AG04449 (cell line): ENCODE measurements at regions of chr3 and their contacts with region 1.

Region 1: DNA sequence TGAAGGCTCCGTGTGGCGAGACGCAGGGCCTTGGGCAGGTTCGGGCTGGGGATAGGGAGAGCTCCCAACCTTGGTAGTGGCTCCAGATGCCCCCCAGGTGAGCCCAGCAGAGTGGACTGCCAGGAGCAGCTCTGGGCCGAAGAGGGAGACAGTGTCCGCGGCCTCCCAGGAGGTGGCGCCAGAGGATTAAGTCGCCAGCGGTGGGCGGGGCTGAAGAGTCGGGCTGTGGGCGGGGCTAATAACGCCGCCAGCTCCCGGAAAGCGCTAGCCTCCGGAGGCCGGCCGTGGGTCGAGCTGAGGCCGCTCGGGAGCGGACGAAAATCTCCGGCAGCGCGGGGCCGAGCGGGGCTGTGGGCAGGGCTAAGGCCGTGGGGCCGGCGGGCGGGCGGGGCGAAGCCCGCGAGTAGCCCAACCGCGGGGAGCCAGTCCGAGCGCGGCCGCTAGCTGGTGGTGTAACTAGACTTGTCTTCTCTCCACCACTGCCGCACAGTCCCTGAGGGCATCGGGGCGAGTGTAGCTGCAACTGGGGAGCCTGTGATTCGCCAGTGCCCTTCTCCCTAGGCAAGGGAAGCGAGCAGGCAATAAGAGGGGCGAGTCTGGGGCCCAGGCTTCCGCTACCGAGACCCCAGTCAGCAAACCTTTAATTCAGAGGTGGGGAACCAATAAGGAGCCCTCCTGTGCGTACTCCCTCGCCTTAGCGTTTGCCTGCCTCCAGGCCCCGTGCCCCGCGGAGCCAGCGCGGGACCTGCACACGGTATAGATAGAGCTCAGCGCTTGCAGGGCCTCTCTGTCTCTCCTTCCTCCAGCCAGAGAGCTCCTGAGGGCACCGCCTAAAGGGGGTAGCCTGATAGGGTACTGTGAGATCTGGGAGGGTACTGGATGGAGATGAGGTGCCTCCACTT is 14.4 kb upstream of the BSN start:
- DNase-seq: peak; percentile 49
- H3K4me3 ChIP-seq: peak overlapping the region; percentile 60
- CTCF ChIP-seq: peak; percentile 88

Region 2: GRCh38 chr3:49469936-49470713 is 69.8 kb before region 1 on chr3 and contains the start of gene DAG1:
- CTCF ChIA-PET with region 1: interaction called, 10 read pairs
- POLR2A ChIA-PET with region 1: no interaction called
- DNase-seq: no peak
- H3K4me3 ChIP-seq: peak within 1 kb of the TSS; percentile 72
- CTCF ChIP-seq: no peak

Region 3: DNA sequence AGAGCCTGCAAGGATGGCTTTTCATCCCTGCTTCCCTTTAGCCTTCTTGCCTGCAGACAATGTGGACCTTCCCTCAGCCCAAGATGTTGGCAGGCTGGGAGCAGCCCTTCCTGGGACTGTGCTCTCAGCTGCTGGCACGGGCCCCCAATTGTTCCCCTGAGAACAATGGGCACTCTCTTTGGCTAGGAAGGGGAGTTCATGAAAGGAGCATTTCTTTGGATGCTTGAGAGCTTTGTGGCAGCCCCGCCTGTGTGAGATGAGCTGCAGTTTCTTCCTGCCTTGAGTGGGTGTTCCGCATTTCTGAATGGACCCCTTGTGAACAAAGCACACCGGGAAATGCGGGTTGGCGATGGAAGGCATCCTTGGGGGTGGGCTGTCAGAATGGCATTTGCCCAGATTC is 20.6 kb before region 1 on chr3:
- CTCF ChIA-PET with region 1: interaction called, 161 read pairs
- POLR2A ChIA-PET with region 1: no interaction called
- DNase-seq: no peak
- H3K4me3 ChIP-seq: no peak overlapping the region
- CTCF ChIP-seq: no peak

Region 4: GRCh38 chr3:49566312-49566711 is 26.4 kb after region 1 on chr3:
- CTCF ChIA-PET with region 1: interaction called, 11 read pairs
- POLR2A ChIA-PET with region 1: no interaction called
- DNase-seq: no peak
- H3K4me3 ChIP-seq: no peak overlapping the region
- CTCF ChIP-seq: no peak

Region 5: DNA sequence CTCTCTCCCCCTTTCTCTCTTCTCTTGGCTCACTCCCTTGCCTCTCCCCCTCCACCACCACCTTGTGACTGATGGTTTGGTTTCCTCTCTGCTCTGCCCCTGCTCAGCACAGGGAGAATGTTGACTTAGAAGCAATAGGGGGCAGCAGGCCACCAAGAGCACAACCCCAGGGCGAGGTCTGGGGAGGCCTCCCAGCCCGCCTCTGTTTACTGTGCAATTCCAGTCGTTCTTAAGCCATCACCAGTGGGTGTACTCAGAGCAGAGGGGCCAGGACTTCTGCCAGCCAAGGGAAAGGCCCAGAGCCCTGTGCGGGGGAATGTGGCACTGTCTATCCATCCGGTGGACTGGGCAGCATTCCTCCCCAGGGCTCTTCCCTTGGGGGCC is 128.5 kb after region 1 on chr3:
- CTCF ChIA-PET with region 1: interaction called, 441 read pairs
- POLR2A ChIA-PET with region 1: interaction called, 8 read pairs
- DNase-seq: no peak
- H3K4me3 ChIP-seq: no peak overlapping the region
- CTCF ChIP-seq: no peak

Region 6: DNA sequence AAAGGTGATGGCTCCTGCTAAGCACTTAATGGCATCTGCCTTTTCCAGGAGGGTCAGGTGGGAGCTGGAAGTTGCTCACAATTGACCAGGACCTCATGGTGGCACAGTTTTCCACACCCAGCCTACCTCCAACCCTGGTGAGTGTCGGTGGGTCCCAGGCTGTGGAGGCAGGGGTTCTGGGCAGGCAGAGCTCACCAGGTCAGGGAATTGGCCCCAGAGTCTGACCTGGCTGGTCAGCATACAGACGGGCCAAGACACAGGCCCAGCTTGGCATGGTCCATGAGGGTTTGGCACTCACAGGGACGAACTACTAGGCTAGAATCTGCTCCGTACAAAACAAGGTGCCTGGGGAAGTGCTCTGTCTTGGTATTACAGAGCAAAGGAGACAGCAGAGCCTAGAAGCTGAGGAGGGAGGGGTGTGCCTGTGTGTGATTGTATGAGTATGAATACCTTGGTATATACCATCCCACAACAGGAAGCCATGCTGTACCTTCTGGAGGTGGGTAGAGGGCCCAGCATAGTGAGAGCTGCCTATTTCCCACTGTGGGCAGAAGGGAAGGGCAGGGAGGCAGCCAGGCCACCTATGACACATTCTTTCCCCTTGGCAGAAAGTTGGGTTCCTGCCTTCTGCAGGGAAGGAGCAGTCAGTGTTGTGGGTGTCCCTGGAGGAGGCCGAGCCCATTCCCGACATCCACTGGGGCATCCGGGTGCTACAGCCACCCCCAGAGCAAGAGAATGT is 140.8 kb after region 1 on chr3:
- CTCF ChIA-PET with region 1: interaction called, 31 read pairs
- POLR2A ChIA-PET with region 1: no interaction called
- DNase-seq: no peak
- H3K4me3 ChIP-seq: no peak overlapping the region
- CTCF ChIP-seq: no peak

Region 7: DNA sequence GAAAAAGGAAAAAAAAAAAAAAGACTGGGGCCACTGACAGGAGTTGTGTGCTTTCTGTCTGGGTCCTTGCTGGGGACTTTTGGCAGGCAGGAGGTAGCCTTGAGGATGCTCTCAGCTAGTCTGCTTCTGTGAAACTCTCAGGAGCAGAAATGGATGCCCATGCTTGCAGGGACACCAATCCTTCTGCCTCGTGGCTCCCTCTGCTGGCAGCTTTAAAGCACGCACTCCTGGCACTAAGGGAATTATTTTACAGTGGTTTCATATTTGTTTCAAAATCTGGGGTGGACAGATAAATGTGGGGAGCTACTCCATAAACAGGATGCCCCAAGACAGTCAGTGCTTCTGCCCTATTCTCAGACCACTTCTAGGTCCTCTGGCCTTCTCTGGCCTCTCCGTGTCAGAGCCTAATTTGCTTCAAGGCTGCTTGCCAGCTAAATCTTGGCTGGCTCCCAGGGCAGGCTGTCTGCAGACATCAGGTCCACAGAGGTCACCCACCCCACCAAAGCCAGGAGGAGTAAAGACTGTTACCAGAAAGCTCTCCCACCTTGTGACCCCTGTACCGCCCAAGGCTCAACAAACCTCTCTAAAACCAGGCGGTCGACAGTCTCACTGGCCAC is 299.4 kb after region 1 on chr3:
- CTCF ChIA-PET with region 1: interaction called, 29 read pairs
- POLR2A ChIA-PET with region 1: no interaction called
- DNase-seq: peak; percentile 19
- H3K4me3 ChIP-seq: no peak overlapping the region
- CTCF ChIP-seq: peak; percentile 83